ENCODE measurements at regions of chr19 and their contacts with region 1.

Region 1: GRCh38 chr19:41263850-41264580 is at the start of gene HNRNPUL1:
- DNase-seq: peak; percentile 99
- ATAC-seq: peak; percentile 67
- H3K4me3 Mint-ChIP-seq: peak within 1 kb of the TSS; percentile 92
- H3K27ac Mint-ChIP-seq: peak within 1 kb of the TSS; percentile 100
- H3K4me1 Mint-ChIP-seq: peaks cover 35% of the 10 kb centered on the region
- H3K27me3 Mint-ChIP-seq: peaks cover 3% of the 10 kb centered on the region
- total RNA-seq, gene HNRNPUL1: 301 to 333 TPM

Region 2: DNA sequence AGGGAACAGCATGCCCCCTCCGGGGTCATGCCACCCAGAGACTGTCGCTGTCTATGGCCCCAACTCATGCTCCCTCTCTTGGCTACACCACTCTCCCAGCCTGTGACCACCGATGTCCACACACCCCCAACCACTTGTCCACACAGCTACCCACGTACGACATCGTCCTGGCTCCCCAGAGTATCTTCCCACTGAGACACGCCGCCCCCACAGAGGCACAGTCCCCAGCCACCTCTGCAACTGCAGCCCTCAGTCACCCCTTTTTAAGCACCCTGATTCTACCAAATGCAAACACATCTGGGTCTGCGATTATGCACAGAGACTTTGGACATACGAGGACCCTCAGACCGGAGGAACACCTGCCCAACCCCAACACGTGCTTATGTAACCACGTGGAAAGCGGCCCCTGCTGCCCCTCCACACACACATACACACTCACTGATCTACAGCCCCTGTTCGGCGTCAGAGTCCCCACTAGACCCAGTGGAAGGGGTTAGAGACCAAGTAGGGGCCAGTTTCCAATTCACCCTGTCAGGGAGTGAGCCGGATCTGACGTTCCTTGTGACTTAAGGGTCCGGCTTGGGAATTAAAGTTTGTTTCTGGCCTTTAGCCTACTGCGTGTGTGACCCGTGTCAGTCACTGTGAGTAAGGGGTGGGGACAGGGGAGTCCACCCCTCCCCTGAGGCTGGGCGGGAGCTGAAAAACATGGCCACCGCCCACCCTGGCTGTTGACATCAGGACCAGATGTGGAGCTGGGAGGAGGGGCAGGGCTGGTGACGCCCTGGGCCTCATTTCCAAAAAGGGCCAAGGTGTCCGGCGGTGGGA is 56.9 kb before region 1 on chr19:
- POLR2A ChIA-PET with region 1: interaction called, 21 read pairs
- DNase-seq: no peak
- ATAC-seq: no peak
- H3K4me3 Mint-ChIP-seq: no peak overlapping the region
- H3K27ac Mint-ChIP-seq: no peak overlapping the region
- H3K4me1 Mint-ChIP-seq: peaks cover 3% of the 10 kb centered on the region
- H3K27me3 Mint-ChIP-seq: no peaks in the 10 kb centered on the region

Region 3: GRCh38 chr19:41226053-41226873 is 37.8 kb before region 1 on chr19:
- POLR2A ChIA-PET with region 1: interaction called, 12 read pairs
- DNase-seq: peak; percentile 60
- ATAC-seq: peak; percentile 62
- H3K4me3 Mint-ChIP-seq: peak overlapping the region; percentile 90
- H3K27ac Mint-ChIP-seq: peak overlapping the region; percentile 84
- H3K4me1 Mint-ChIP-seq: peaks cover 17% of the 10 kb centered on the region
- H3K27me3 Mint-ChIP-seq: peaks cover 19% of the 10 kb centered on the region

Region 4: DNA sequence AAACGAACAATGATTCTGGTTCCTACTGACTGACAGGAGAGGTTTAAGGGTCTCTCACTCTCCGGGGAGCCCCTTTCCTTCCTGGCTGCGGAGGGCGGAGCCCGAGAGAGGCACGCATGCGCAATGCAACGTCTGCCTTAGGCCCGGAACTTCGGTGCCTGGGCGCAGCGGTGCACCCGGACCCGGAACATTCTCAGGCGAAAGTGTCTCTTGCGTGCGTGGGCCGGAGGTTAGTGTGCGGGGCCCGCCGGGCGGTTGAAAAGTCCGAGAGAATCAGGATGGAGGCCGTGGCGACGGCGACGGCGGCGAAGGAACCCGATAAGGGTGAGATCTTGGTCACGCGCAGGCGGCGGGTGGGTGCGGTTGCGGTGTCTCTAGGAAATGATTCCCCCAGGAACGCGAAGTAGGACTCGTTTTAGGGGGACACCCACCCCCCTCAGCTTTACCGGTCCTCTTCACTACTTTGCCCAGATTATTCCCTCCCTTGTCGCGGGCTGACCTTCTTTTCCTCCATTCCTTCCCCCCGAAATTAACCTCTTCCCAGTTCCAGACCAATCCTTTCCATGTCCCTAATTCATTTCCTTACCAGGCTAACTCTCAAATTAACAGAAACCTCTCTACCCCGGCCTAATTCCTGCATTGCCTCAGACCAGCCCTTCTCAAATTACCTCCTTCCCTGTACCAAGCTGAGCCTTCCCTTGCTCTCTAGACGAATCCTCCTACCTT is 46.2 kb after region 1 on chr19 and contains the start of gene CCDC97:
- POLR2A ChIA-PET with region 1: interaction called, 195 read pairs
- DNase-seq: peak; percentile 93
- ATAC-seq: peak; percentile 62
- H3K4me3 Mint-ChIP-seq: peak within 1 kb of the TSS; percentile 91
- H3K27ac Mint-ChIP-seq: peak within 1 kb of the TSS; percentile 96
- H3K4me1 Mint-ChIP-seq: peaks cover 50% of the 10 kb centered on the region
- H3K27me3 Mint-ChIP-seq: no peaks in the 10 kb centered on the region
- total RNA-seq, gene CCDC97: 37.8 to 40.8 TPM

Region 5: GRCh38 chr19:41327576-41328156 is 63.7 kb after region 1 on chr19:
- POLR2A ChIA-PET with region 1: interaction called, 16 read pairs
- DNase-seq: peak; percentile 87
- ATAC-seq: peak; percentile 58
- H3K4me3 Mint-ChIP-seq: peak overlapping the region; percentile 78
- H3K27ac Mint-ChIP-seq: peak overlapping the region; percentile 87
- H3K4me1 Mint-ChIP-seq: peaks cover 54% of the 10 kb centered on the region
- H3K27me3 Mint-ChIP-seq: no peaks in the 10 kb centered on the region

Region 6: GRCh38 chr19:41353466-41354342 is 89.7 kb after region 1 on chr19 and contains the start of gene TGFB1:
- POLR2A ChIA-PET with region 1: interaction called, 31 read pairs
- DNase-seq: peak; percentile 96
- ATAC-seq: peak; percentile 46
- H3K4me3 Mint-ChIP-seq: peak within 1 kb of the TSS; percentile 97
- H3K27ac Mint-ChIP-seq: peak within 1 kb of the TSS; percentile 97
- H3K4me1 Mint-ChIP-seq: peaks cover 59% of the 10 kb centered on the region
- H3K27me3 Mint-ChIP-seq: no peaks in the 10 kb centered on the region
- total RNA-seq, gene TGFB1: 172 to 179 TPM

Region 7: DNA sequence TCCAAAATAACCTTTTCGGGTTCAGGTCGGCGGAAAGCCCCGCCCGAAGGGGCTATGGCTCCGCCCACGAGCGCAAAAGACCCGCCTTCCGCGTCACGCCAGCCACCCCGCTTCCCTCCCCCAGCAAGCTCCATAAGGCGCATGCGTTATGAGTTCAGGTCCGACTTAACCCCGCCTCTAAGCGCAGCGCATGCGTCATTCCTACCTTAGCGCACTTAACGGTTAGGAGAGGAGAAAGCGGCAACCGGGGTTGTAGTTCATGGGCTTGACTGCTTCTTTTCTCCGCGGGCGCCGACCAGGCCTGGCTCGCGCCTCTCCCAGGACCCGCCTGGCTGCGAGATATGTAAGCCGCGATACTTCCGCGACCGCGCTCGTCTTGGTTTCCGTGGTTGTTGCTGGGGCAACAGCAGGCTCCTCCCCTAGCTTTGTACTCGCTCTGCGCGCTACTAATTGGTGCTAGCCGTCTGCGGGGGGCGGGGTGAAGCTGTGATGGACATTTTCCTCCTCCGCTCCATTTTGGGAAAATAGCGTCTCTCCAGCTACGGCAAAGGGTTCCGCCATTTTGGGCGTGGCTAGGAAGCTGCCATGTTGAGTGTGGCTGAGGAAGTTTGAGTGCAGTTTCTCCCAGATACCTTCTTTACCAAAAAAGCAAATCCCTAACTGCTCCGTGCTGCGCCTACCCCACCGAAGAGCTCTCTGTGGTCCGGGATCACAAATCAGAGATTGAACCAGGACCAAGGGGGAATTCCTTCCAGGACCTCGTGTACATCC is 99.9 kb after region 1 on chr19 and contains the start of gene B9D2:
- POLR2A ChIA-PET with region 1: interaction called, 12 read pairs
- DNase-seq: peak; percentile 96
- ATAC-seq: peak; percentile 90
- H3K4me3 Mint-ChIP-seq: peak within 1 kb of the TSS; percentile 98
- H3K27ac Mint-ChIP-seq: peak within 1 kb of the TSS; percentile 99
- H3K4me1 Mint-ChIP-seq: peaks cover 25% of the 10 kb centered on the region
- H3K27me3 Mint-ChIP-seq: no peaks in the 10 kb centered on the region
- total RNA-seq, gene B9D2: 11.5 to 13.0 TPM

Region 8: DNA sequence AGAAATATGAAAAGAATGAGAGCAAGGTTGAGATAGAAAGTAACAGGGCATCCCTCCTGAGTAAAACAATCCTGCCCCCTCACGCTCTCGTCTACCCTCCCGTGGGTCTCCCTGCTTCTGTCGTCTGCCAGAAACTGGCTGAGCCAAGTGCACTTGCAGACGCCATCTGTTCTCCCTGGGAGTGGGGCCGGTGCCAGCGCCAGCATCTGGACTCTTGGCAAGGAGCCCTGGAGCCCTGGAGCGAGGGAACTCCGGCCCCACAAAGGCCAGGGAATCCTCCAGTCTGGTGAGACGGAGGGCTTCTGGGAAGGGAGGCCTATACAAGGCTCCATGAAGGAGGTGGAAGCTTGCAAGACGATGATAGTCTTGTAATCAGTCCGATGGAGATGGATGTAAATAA is 110.0 kb after region 1 on chr19:
- POLR2A ChIA-PET with region 1: no interaction called
- DNase-seq: no peak
- ATAC-seq: no peak
- H3K4me3 Mint-ChIP-seq: no peak overlapping the region
- H3K27ac Mint-ChIP-seq: no peak overlapping the region
- H3K4me1 Mint-ChIP-seq: peaks cover 15% of the 10 kb centered on the region
- H3K27me3 Mint-ChIP-seq: no peaks in the 10 kb centered on the region

Region 9: GRCh38 chr19:41395355-41395754 is 131.3 kb after region 1 on chr19:
- POLR2A ChIA-PET with region 1: no interaction called
- DNase-seq: no peak
- ATAC-seq: no peak
- H3K4me3 Mint-ChIP-seq: peak overlapping the region; percentile 97
- H3K27ac Mint-ChIP-seq: peak overlapping the region; percentile 1
- H3K4me1 Mint-ChIP-seq: peaks cover 26% of the 10 kb centered on the region
- H3K27me3 Mint-ChIP-seq: no peaks in the 10 kb centered on the region

Measured in activated naive CD8-positive, alpha-beta T cell treated with anti-CD3 and anti-CD28 coated beads, Interleukin-2, amount 10 ng/mL, durations not matched to agents 7 days and 5 days (primary cell).